H1 (cell line): ENCODE measurements at regions of chr1 and their contacts with region 1.

Region 1: DNA sequence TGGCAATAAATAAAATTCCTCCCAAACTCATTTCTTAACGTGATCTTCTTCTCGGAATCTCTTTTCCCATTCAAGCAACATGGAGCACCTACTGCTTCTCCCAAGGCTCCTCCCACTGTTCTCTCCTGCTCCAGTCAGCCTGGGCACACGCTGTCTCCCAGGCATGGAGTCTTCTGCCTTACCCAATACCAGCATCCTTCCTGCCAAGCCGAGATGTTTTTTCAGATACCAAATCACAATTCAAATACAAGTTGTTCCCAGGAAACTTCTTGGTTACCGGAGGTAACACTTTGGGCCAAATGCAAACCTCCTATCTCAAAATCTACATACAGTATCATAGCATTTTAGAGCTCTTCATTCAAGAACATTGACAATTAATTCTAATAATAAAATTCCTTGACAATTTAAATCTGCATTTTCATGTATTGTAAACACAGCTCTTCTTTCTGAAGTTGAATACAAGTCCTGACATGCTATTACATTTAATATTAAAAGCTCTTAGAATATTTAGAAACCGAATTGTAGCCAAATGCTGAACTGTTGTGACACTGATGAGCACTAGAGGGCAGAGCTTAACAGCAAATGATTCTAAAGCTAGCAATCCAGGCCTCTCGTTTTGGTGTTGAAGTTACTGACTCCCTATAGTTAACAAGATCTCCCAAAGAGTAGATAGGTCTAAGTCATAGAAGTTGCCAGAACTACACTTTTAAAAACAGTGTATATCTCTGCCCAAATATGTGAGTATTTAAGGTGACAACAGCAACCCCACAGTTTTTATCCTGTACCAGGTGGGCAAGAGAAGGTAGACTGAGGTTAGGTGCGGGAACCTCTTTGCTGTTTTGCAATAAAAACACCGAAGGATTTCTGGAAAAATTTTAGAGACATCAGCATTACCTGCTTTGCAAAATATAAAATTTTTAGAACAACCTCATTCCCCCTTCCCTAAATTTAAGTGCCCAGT is 52.3 kb downstream of the BCAR3 start:
- DNase-seq: no peak
- H3K4me3 ChIP-seq: no peak overlapping the region
- H3K27ac ChIP-seq: no peak overlapping the region
- H3K4me1 ChIP-seq: 0 out of 7 replicates have a peak, but pooled peaks cover 0 to 2% (median 0%) of the 10 kb centered on the region in 4 experiments
- H3K27me3 ChIP-seq: no peaks in the 10 kb centered on the region
- CTCF ChIP-seq: peak in 2 of 3 experiments; percentile 81 to 86; a peak in 3 of 4 replicates
- EP300 ChIP-seq: no peak; a peak in 1 of 3 replicates
- POLR2A ChIP-seq: no peak
- RAD21 ChIP-seq: peak; percentile 98 to 99

Region 2: DNA sequence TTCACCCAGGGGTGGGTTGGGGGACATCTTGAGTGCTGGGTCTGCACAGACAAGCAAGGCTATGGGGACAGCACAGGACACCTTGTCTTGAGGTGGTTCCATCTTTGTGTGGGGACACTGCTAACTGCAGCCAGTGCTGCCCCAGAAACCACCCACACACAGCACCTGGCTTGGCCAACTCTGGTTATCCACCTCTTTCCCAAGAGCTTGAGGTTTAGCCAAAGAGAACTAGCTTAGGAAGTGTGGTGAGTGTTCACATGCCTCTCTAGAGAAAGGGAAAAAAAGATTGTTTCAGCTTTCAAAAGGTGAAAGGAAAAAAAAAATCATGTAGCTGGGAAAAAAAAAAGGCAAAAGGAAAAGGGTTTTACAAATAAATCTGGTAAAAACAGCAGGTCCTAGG is 19.9 kb after region 1 on chr1:
- CTCF ChIA-PET with region 1: interaction called, 62 read pairs
- POLR2A ChIA-PET with region 1: interaction called, 18 read pairs
- DNase-seq: no peak
- H3K4me3 ChIP-seq: no peak overlapping the region
- H3K27ac ChIP-seq: no peak overlapping the region
- H3K4me1 ChIP-seq: peaks cover 3 to 13% (median 4%) of the 10 kb centered on the region in 4 experiments; a peak in 5 of 7 replicates
- H3K27me3 ChIP-seq: no peaks in the 10 kb centered on the region
- CTCF ChIP-seq: no peak
- EP300 ChIP-seq: no peak
- POLR2A ChIP-seq: no peak
- RAD21 ChIP-seq: no peak

Region 3: DNA sequence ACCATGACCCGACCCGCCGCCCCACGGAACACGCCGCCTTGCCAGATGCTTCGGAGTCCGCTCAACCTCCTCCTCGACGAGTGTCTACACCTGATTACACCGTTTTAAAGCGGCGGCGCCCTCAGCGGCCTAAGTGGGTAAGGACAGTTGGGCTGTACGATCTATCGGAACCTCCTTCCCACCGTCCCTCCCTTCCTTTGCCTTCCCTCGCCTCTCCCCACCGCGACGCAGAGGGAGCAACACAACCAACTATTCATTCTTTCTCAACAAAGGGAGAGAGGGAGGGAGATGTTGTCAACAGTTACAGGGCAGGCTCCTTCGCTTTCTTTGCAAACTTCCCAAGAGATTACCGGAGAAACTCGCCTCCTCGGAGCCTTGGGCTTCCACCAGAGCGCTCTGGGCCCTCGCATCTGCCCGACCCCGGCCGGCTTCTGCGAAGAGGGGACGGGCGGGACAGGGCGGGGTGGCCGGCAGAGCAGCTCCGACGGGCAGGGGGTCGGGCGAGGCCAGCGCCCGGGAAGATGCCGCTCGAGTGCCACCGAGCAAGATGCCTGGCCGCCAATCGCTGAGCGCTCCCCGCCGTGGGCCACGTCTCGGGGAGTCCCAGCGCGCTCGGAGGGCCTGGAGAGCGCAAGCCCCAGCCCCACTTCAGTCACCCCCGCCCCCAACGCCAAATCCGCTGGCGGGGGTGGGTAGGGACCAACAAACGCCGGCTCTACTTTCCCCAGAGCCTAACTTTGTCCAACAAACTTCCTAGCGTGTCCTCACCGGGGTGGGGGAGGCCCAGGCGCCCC is 51.6 kb after region 1 on chr1:
- CTCF ChIA-PET with region 1: interaction called, 98 read pairs
- POLR2A ChIA-PET with region 1: no interaction called
- DNase-seq: peak; percentile 50 to 84
- H3K4me3 ChIP-seq: peak overlapping the region; percentile 64 to 87 (median 70)
- H3K27ac ChIP-seq: no peak overlapping the region
- H3K4me1 ChIP-seq: peaks cover 5 to 12% (median 5%) of the 10 kb centered on the region in 4 experiments
- H3K27me3 ChIP-seq: peaks cover 0 to 8% (median 2%) of the 10 kb centered on the region in 4 experiments; a peak in 4 of 7 replicates
- CTCF ChIP-seq: peak; percentile 59 to 91 (median 84)
- EP300 ChIP-seq: no peak
- POLR2A ChIP-seq: no peak; a peak in 1 of 3 replicates
- RAD21 ChIP-seq: peak; percentile 61 to 68

Region 4: GRCh38 chr1:93701619-93702018 is 72.2 kb after region 1 on chr1:
- CTCF ChIA-PET with region 1: interaction called, 33 read pairs
- POLR2A ChIA-PET with region 1: no interaction called
- DNase-seq: peak in 1 of 2 experiments; percentile 31
- H3K4me3 ChIP-seq: no peak overlapping the region
- H3K27ac ChIP-seq: no peak overlapping the region
- H3K4me1 ChIP-seq: peaks cover 0 to 7% (median 4%) of the 10 kb centered on the region in 4 experiments; a peak in 5 of 7 replicates
- H3K27me3 ChIP-seq: no peaks in the 10 kb centered on the region
- CTCF ChIP-seq: no peak
- EP300 ChIP-seq: no peak
- POLR2A ChIP-seq: no peak
- RAD21 ChIP-seq: no peak

Region 5: GRCh38 chr1:93734999-93735398 is 105.6 kb after region 1 on chr1:
- CTCF ChIA-PET with region 1: interaction called, 29 read pairs
- POLR2A ChIA-PET with region 1: no interaction called
- DNase-seq: no peak
- H3K4me3 ChIP-seq: no peak overlapping the region
- H3K27ac ChIP-seq: no peak overlapping the region
- H3K4me1 ChIP-seq: peaks cover 0 to 6% (median 1%) of the 10 kb centered on the region in 4 experiments; a peak in 2 of 7 replicates
- H3K27me3 ChIP-seq: peaks cover 0 to 2% (median 0%) of the 10 kb centered on the region in 4 experiments; a peak in 1 of 7 replicates
- CTCF ChIP-seq: peak; percentile 30 to 52 (median 51); a peak in 3 of 4 replicates
- EP300 ChIP-seq: no peak
- POLR2A ChIP-seq: no peak
- RAD21 ChIP-seq: peak; percentile 28 to 44

Region 6: DNA sequence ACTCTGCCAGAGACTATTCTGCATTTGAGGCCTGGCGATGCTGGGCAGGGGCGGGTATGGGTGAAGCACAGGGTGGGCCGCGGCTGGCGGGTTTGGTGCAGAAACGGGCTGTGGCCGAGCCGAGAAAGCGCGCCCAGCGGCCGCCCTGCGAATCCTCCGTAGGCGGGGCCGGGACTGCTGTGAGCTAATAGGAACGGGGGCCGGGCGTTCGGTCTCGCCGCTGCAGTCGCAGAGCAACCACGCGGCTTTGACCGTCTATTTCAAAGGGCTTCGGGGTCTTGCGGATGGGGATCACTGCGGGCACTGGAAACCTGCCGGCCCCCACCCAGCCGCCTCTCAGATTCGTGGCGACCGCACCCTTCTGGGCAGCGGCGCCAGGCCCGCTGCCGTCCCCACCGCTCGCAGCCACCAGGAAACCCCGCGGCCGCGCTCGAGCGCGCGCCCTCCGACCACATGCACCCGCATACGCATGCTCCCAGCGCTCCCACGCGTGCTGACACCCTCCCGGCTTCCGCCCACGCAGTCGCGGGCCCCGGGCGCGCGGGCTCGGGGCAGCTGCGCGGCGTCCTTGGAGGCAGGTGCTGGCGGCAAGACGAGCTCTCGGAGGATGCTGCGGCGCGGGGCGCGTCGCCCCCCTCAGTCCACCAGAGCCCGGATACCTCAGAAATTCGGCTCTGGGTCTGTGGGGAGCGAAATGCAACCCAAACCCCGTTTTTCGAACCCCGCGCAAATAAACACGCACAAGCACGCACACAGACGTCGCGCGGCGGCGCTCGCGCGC is 217.0 kb after region 1 on chr1:
- CTCF ChIA-PET with region 1: interaction called, 324 read pairs
- POLR2A ChIA-PET with region 1: interaction called, 6 read pairs
- DNase-seq: peak in 1 of 2 experiments; percentile 91
- H3K4me3 ChIP-seq: peak overlapping the region; percentile 73 to 93 (median 82)
- H3K27ac ChIP-seq: no peak overlapping the region
- H3K4me1 ChIP-seq: peaks cover 0 to 7% (median 2%) of the 10 kb centered on the region in 4 experiments; a peak in 2 of 7 replicates
- H3K27me3 ChIP-seq: no peaks in the 10 kb centered on the region; a peak in 1 of 7 replicates
- CTCF ChIP-seq: peak; percentile 13 to 27 (median 26); a peak in 3 of 4 replicates
- EP300 ChIP-seq: no peak
- POLR2A ChIP-seq: peak in 1 of 2 experiments; percentile 68; a peak in 2 of 3 replicates
- RAD21 ChIP-seq: peak in 1 of 2 experiments; percentile 23; a peak in 2 of 4 replicates